Activated CD8-positive, alpha-beta T cell treated with anti-CD3 and anti-CD28 coated beads for 36 hours (primary cell): ENCODE measurements at regions of chr5 and their contacts with region 1.

Region 1: GRCh38 chr5:177454397-177455035 is 7.9 kb downstream of the PRR7 start:
- DNase-seq: peak; percentile 94
- ATAC-seq: peak; percentile 41
- H3K4me3 Mint-ChIP-seq: peak overlapping the region; percentile 83
- H3K27ac Mint-ChIP-seq: peak overlapping the region; percentile 80
- H3K4me1 Mint-ChIP-seq: peaks cover 27% of the 10 kb centered on the region
- H3K27me3 Mint-ChIP-seq: no peaks in the 10 kb centered on the region
- CTCF ChIP-seq: peak; percentile 79

Region 2: GRCh38 chr5:177256296-177256695 is 198.2 kb before region 1 on chr5:
- CTCF ChIA-PET with region 1: no interaction called
- POLR2A ChIA-PET with region 1: no interaction called
- intact Hi-C with region 1: no loop called
- DNase-seq: no peak
- ATAC-seq: no peak
- H3K4me3 Mint-ChIP-seq: no peak overlapping the region
- H3K27ac Mint-ChIP-seq: peak overlapping the region; percentile 3
- H3K4me1 Mint-ChIP-seq: no peaks in the 10 kb centered on the region
- H3K27me3 Mint-ChIP-seq: no peaks in the 10 kb centered on the region
- CTCF ChIP-seq: no peak

Region 3: DNA sequence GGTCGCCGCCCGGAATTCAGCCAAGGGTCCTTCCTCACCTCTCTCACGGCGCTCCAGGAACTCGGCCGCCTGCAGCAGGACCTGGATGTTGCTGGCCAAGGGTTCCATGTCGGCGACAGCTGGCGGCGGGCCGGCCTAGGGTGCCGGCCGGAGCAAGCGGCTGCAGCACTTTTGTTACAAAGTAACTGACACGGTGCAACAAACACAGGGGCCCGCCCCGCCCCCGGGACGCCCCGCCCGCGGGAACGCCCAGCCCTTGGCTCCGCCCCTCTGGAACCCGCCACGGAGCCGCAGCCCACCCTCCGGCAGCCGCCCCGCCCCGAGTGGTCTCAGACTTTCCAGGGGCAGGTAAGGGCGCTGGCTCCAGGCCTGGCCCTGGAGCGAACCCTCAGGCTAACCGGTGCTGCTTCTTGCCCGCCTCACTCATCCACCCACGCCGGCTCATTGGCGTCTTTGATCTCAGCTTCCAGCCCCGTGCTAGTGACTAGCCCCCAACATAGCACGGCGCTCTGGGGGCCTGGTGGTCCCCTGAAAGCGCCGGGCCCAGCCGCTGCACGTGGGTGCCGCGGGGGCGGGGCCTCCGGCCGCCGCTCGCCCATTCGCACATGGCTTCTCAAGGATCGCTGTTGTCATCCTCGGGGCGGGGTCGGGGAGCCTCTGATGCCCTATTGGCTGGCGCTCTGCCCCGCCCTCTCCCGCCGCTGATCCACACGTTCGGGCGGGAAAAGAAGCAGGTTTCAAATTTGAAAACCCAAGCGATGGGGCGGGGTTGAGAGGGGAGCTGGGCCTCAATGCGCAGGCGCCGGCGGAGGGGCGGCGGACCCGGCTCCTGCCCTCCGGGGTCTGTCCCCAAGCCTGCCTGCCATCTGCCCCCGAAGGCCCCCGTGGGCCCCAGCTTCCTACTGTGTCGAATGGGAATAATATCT is 142.5 kb before region 1 on chr5 and contains the start of gene MXD3:
- CTCF ChIA-PET with region 1: interaction called, 13 read pairs
- POLR2A ChIA-PET with region 1: interaction called, 4 read pairs
- intact Hi-C with region 1: loop called (anchors 5 kb)
- DNase-seq: peak; percentile 100
- ATAC-seq: peak; percentile 87
- H3K4me3 Mint-ChIP-seq: peak within 1 kb of the TSS; percentile 89
- H3K27ac Mint-ChIP-seq: peak within 1 kb of the TSS; percentile 91
- H3K4me1 Mint-ChIP-seq: peaks cover 26% of the 10 kb centered on the region
- H3K27me3 Mint-ChIP-seq: no peaks in the 10 kb centered on the region
- CTCF ChIP-seq: no peak
- total RNA-seq, gene MXD3: 19.3 to 25.1 TPM

Region 4: DNA sequence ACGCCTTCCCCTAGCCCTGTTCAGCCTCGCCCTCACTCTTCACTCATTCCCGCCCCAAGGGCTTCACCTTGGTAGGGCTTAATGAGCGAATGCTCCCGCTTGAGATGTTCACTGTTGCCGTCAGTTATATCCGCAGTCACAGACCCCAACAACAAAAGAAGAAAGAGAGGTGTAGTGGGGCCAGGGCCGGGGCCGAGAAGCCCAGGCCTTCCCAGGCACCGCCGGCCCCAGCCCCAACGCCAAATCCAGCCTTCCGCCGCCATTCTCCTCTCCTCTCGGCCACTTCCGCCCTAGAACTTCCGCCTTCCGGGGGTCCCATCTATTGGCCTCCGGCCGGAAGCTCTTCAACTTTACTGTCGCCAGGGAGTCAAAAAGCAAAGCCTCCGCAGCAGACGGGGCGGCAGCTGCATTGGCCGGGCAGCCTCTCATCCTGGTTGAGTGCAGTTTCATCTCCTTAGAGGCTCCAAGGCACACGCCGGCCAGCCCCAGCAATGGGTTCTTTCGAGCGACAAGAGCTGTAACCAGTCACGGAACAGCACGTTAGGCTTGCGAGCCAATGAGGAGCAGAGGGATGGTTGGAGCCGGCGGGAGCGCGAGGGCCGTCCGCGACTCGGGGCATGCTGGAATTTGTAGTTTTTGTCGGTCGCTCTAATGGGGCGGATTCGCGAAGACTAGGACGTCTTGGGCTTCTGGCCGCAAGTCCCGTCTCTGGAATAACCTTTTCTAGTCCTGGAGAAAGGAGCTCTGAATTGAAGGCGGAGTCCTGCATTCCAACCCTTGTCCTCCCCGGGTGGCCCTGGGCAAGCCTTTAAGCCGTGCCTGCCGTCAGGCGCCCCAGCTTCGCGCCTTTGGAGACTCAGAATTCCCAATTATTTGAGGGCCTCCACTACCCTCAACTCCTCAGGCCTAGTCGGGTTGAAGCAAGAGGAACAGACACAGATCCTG is 102.9 kb before region 1 on chr5 and contains the start of gene LMAN2:
- CTCF ChIA-PET with region 1: interaction called, 13 read pairs
- POLR2A ChIA-PET with region 1: interaction called, 4 read pairs
- intact Hi-C with region 1: no loop called
- DNase-seq: peak; percentile 96
- ATAC-seq: peak; percentile 98
- H3K4me3 Mint-ChIP-seq: peak within 1 kb of the TSS; percentile 93
- H3K27ac Mint-ChIP-seq: peak within 1 kb of the TSS; percentile 100
- H3K4me1 Mint-ChIP-seq: peaks cover 54% of the 10 kb centered on the region
- H3K27me3 Mint-ChIP-seq: no peaks in the 10 kb centered on the region
- CTCF ChIP-seq: no peak
- total RNA-seq, gene LMAN2: 79.9 to 87.5 TPM

Region 5: DNA sequence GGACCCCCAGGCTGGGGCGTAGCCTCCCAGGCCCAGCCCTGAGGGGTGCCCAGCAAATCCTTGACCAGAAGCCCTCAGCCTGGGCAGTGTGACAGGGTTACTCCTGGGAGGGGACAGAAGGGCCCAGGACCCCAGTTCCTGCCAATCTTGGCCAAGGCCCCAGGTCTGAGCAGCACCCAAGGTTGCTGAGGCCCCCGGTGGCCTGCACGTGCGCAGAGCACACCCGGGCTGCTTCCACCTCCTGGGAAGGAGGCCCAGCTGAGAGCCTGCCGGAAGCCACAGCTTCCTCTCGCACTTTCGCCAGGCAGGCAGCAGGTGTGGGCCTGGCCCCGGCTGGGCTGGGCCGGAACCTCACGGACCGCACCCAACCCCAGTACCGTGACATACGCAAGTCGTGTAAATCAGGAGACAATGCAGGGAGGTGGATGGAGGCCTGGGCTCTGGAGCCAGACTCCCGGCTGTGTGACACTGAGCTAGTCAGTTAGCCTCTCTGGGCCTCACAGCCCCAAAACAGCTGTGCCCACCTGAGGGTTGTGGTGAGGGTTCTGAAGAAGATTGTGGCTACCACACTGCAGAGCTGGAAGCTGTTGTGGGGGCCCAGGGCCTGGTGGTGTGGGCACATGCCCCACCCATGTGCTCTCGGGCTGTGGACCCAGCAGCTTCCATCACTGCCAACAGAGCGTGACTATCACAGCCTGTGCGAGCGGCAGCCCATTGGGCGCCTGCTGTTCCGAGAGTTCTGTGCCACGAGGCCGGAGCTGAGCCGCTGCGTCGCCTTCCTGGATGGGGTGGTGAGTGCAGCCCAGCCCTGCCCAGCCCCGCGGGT is 23.0 kb before region 1 on chr5:
- CTCF ChIA-PET with region 1: interaction called, 102 read pairs
- POLR2A ChIA-PET with region 1: interaction called, 606 read pairs
- intact Hi-C with region 1: no loop called
- DNase-seq: peak; percentile 92
- ATAC-seq: peak; percentile 37
- H3K4me3 Mint-ChIP-seq: peak overlapping the region; percentile 97
- H3K27ac Mint-ChIP-seq: peak overlapping the region; percentile 98
- H3K4me1 Mint-ChIP-seq: peaks cover 57% of the 10 kb centered on the region
- H3K27me3 Mint-ChIP-seq: no peaks in the 10 kb centered on the region
- CTCF ChIP-seq: no peak

Region 6: GRCh38 chr5:177473461-177474001 is 19.0 kb after region 1 on chr5 and contains the start of gene DBN1:
- CTCF ChIA-PET with region 1: interaction called, 48 read pairs
- POLR2A ChIA-PET with region 1: interaction called, 294 read pairs
- intact Hi-C with region 1: no loop called
- DNase-seq: peak; percentile 54
- ATAC-seq: peak; percentile 35
- H3K4me3 Mint-ChIP-seq: peak within 1 kb of the TSS; percentile 80
- H3K27ac Mint-ChIP-seq: peak within 1 kb of the TSS; percentile 82
- H3K4me1 Mint-ChIP-seq: peaks cover 60% of the 10 kb centered on the region
- H3K27me3 Mint-ChIP-seq: no peaks in the 10 kb centered on the region
- CTCF ChIP-seq: no peak
- total RNA-seq, gene DBN1: 101 to 105 TPM

Region 7: GRCh38 chr5:177497292-177498033 is 42.9 kb after region 1 on chr5 and contains the start of gene PDLIM7:
- CTCF ChIA-PET with region 1: interaction called, 41 read pairs
- POLR2A ChIA-PET with region 1: interaction called, 9 read pairs
- intact Hi-C with region 1: loop called (anchors 5 kb)
- DNase-seq: peak; percentile 97
- ATAC-seq: peak; percentile 82
- H3K4me3 Mint-ChIP-seq: peak within 1 kb of the TSS; percentile 79
- H3K27ac Mint-ChIP-seq: peak within 1 kb of the TSS; percentile 68
- H3K4me1 Mint-ChIP-seq: peaks cover 38% of the 10 kb centered on the region
- H3K27me3 Mint-ChIP-seq: peaks cover 11% of the 10 kb centered on the region
- CTCF ChIP-seq: no peak
- total RNA-seq, gene PDLIM7: 68.4 to 73.0 TPM

Region 8: DNA sequence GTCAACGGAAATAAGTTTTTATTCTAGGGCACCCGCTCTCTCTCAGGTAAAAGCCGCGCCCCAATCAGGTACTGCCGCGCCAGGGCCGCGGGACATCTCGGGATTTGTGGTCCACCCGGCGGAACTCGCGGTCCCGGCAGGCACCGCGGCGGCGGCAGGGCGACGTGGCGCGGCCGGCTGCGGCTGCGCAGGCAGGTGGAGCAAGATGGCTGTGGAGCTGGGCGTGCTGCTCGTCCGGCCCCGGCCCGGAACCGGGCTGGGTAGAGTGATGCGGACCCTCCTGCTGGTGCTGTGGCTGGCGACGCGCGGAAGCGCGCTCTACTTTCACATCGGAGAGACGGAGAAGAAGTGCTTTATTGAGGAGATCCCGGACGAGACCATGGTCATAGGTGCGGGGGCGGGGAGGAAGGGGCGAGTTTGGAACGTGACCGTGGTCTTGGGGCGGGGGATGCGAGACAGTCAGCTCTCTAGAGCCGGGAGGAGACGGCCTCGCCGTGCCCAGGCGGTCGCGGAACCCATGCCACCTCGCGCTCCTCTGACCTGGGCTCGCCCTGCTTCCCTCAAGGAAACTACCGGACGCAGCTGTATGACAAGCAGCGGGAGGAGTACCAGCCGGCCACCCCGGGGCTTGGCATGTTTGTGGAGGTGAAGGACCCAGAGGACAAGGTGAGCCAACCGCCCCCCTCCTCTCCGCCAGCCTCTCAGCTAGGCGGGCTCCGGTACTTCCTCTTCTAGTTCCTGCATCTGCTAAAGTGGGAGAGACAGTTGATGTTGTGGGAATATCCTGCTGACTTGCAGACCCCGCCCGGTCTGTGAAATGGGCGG is 137.7 kb after region 1 on chr5 and contains the start of gene TMED9:
- CTCF ChIA-PET with region 1: no interaction called
- POLR2A ChIA-PET with region 1: no interaction called
- intact Hi-C with region 1: no loop called
- DNase-seq: peak; percentile 89
- ATAC-seq: peak; percentile 97
- H3K4me3 Mint-ChIP-seq: peak within 1 kb of the TSS; percentile 92
- H3K27ac Mint-ChIP-seq: peak within 1 kb of the TSS; percentile 100
- H3K4me1 Mint-ChIP-seq: peaks cover 24% of the 10 kb centered on the region
- H3K27me3 Mint-ChIP-seq: peaks cover 12% of the 10 kb centered on the region
- CTCF ChIP-seq: no peak
- total RNA-seq, gene TMED9: 118 to 120 TPM